Activated CD4-positive, alpha-beta memory T cell treated with anti-CD3 and anti-CD28 coated beads for 36 hours (primary cell): ENCODE measurements at regions of chr4 and their contacts with region 1.

Region 1: GRCh38 chr4:106541253-106541652 is 172.7 kb upstream of the GIMD1 start:
- DNase-seq: no peak
- H3K4me3 Mint-ChIP-seq: no peak overlapping the region
- H3K27ac Mint-ChIP-seq: no peak overlapping the region
- H3K4me1 Mint-ChIP-seq: no peaks in the 10 kb centered on the region
- H3K27me3 Mint-ChIP-seq: no peaks in the 10 kb centered on the region

Region 2: GRCh38 chr4:106565727-106566126 is 24.5 kb after region 1 on chr4:
- CTCF ChIA-PET with region 1: no interaction called
- POLR2A ChIA-PET with region 1: no interaction called
- intact Hi-C with region 1: loop called (anchors 1 kb)
- DNase-seq: no peak
- H3K4me3 Mint-ChIP-seq: no peak overlapping the region
- H3K27ac Mint-ChIP-seq: no peak overlapping the region
- H3K4me1 Mint-ChIP-seq: no peaks in the 10 kb centered on the region
- H3K27me3 Mint-ChIP-seq: no peaks in the 10 kb centered on the region